ENCODE measurements at regions of chr17 and their contacts with region 1.

Region 1: DNA sequence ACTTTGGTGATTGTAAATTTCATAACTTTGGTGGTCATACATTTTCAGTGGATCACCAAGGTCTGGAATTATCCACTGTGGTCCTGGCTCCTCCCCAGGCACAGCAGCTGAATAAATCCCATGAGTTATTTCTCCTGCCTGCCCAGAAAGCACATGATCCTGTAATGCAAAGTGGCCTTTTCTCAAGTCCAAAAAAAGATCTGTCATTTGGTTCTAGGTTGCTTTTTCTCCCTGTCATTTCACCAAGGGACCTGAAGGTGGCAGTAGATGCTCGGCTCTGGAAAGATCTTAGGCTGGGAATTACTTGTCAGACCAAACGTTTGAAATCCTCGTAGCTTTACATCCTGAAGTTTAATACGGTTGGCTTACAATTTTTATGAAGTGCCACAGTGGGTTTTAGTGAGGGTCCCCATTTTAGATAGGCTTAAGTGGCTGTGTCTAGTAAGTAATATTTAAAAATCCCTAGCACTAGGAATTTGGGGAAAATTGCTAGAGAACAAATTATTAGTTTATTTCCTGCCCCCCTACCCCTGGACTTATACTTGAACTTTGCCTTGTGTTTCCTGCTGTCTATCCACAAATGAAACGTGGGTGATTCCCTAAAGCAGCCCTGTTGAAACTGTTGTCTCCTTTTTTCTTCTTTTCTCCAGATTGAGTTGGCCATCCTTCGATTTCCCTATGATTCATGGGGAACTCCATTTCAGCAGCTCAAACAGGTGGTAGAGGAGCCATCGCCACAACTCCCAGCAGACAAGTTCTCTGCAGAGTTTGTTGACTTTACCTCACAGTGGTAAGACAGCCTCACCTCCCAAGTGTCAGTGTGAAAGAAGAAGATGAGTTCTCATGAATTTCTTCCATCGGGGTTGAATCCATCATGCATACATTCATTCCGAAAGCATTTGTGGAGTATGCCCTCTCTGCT is 111.7 kb downstream of the MAP2K6 start:
- DNase-seq: peak; percentile 34 to 69
- H3K4me3 ChIP-seq: no peak overlapping the region
- H3K27ac ChIP-seq: no peak overlapping the region
- H3K4me1 ChIP-seq: no peaks in the 10 kb centered on the region
- H3K27me3 ChIP-seq: no peaks in the 10 kb centered on the region
- CTCF ChIP-seq: peak; percentile 77 to 86

Region 2: GRCh38 chr17:69282002-69282401 is 244.2 kb before region 1 on chr17:
- intact Hi-C with region 1: no loop called
- DNase-seq: no peak
- H3K4me3 ChIP-seq: no peak overlapping the region
- H3K27ac ChIP-seq: no peak overlapping the region
- H3K4me1 ChIP-seq: no peaks in the 10 kb centered on the region
- H3K27me3 ChIP-seq: no peaks in the 10 kb centered on the region
- CTCF ChIP-seq: no peak

Region 3: DNA sequence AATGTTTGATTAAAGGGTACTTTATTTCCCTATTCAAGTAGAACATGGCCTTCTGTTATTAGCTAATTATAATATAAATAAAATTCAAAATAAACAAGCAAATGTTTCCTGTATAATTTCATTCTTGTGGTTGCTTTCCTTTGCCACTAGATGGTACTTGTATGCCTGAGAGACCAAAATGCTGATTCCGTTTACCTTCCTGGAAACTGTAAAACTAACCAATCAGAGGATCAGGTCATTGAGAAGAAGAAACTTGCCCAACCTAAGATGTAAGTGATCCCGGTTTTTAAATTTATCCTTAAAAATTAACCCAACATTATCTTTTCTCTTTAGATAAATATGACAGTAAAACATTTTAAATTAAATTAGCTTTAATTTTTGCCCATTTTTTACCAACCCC is 191.1 kb before region 1 on chr17:
- intact Hi-C with region 1: loop called (anchors 2 kb)
- DNase-seq: no peak
- H3K4me3 ChIP-seq: no peak overlapping the region
- H3K27ac ChIP-seq: no peak overlapping the region
- H3K4me1 ChIP-seq: no peaks in the 10 kb centered on the region
- H3K27me3 ChIP-seq: no peaks in the 10 kb centered on the region
- CTCF ChIP-seq: peak; percentile 43 to 51

Region 4: DNA sequence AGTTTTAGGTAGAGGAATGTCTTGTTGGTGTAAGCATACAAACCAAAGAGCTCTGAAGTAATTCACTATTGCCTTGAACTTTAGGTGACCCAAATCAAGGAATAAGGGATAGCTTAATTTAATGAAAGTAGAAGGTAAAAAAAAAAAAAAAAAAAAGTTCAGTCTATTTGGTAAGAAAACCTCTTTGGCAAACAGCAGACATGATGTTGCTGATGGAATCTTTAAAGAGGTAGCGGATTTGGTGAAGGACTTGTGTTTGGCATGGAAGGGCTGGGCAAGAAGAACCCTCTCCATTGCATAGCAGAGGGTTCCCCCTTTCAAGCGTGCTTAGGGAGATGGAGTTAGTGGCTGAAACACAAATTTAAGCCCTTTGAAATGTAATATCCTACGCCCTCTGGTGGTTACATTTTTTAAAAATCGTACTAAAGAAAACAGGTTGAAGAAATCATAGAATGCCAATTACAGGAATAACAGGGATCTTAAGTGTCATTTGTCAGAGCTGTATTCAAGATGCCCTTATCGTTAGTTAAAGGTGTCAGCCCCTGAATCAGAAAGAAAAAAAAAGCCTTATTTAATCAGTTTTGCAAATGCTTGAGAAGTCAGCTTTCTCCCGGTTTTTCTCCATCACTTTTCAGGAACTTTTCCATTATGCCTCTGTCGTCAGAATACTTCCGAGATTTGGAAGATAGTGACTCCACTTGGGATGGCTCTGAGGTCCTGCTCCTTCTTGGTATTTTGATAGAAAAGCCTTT is 1026.2 kb after region 1 on chr17:
- intact Hi-C with region 1: loop called (anchors 5 kb)
- DNase-seq: no peak
- H3K4me3 ChIP-seq: no peak overlapping the region
- H3K27ac ChIP-seq: no peak overlapping the region
- H3K4me1 ChIP-seq: no peaks in the 10 kb centered on the region
- H3K27me3 ChIP-seq: no peaks in the 10 kb centered on the region
- CTCF ChIP-seq: peak; percentile 30 to 58

Region 5: DNA sequence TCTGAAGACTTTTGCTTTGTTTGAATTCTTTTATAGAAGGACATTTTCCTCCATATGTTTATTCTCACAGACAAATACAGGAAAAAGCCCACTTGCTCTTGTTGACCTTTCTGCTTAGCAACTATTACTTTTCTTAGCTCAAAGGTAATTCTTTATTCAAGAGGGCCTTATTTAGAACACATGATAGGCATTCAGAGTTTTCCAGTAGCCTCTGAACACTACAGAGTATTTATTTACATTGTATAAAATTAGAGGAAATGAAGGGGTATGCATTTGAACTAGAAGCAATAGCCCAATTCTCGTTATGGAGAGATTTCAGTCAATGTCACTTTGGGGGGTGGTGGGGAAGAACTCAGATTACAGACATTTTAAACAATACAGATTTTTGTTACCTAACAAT is 1224.8 kb after region 1 on chr17:
- intact Hi-C with region 1: no loop called
- DNase-seq: no peak
- H3K4me3 ChIP-seq: no peak overlapping the region
- H3K27ac ChIP-seq: no peak overlapping the region
- H3K4me1 ChIP-seq: no peaks in the 10 kb centered on the region
- H3K27me3 ChIP-seq: no peaks in the 10 kb centered on the region
- CTCF ChIP-seq: no peak